ENCODE measurements at regions of chr10 and their contacts with region 1.

Region 1: DNA sequence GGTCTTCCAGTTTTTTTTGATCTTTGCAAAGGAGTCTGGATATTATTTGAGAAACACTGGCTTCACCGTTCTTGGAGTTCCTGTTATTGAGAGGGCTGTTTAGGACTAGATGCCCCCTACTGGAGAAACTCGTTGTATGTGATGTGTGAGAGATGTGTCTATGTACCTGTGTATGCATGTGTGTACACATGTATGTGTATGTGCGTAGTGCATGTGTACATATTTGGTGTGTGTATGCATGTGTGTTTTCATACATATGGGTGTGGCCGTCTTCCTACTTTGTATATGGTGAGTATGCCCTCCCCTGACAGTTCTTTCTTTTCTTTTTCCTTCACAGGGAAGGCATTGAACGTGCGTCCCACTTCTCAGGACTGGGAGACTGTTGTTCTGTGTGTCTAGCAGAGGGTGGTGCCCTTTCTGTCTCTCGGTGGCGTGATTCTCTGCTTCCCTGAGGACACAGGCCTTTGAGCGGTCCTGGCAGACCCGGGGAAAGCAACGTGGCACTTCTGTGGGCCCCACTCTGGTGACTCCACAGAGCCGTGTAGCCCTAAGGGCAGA is 3.0 kb upstream of the CALHM3 start:
- DNase-seq: no peak
- ATAC-seq: peak; percentile 58

Region 2: GRCh38 chr10:103416436-103417147 is 65.5 kb before region 1 on chr10:
- intact Hi-C with region 1: loop called (anchors 5 kb)
- DNase-seq: peak; percentile 40 to 81
- ATAC-seq: peak; percentile 68

Measured in left colon (tissue), 2 donors.